ENCODE measurements at regions of chr15 and their contacts with region 1.

Region 1: GRCh38 chr15:38252481-38253412 is at the start of gene SPRED1:
- DNase-seq: no peak
- H3K4me3 ChIP-seq: peak within 1 kb of the TSS; percentile 91 to 99 (median 98)
- H3K27ac ChIP-seq: peak within 1 kb of the TSS; percentile 99 to 100 (median 99)
- H3K4me1 ChIP-seq: peaks cover 13 to 56% (median 39%) of the 10 kb centered on the region in 4 donors
- H3K27me3 ChIP-seq: no peaks in the 10 kb centered on the region
- CTCF ChIP-seq: no peak
- EP300 ChIP-seq: no peak
- POLR2A ChIP-seq: no peak
- total RNA-seq, gene SPRED1: 14.5 to 31.1 (median 19.0) TPM

Region 2: DNA sequence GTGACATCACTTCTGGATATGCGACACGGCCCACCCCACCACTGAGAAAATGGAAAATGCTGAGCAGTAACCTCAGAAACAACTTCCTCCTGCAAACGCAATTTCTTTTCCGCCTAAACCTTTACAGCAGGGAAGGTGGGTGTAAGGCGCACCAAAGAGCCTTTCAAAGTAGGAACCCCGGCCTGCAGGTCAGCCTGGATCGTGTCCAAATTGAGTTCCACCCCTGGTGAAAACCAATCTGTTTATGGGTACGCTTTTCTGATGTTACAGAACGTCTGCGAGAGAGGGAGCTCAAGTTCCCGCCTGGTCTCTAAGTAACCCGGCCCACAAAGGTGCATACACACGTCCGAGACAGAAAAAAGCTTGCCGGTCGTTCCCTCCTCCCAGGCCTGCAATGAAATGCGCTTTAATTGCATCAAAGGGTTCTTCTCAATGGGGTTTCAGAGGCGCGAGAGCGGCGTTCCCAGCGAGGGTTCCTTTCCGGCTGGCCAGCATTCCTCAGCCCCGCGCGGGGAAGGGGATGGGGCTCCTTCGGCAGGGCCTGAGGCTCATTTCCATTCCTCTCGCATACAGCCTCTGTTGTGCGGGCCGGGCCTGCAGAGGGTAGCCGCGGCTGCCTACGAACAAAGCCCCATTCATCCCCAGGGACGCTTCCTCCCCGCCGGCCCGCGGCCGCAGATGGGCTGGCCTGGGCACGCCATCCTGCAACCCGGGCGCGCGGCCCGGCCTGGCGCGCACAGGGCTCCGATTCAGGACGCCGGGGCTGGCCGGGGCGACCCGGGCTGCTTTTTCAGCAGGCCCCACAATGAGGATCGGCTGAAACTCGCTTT is 180.2 kb before region 1 on chr15:
- intact Hi-C with region 1: loop called (anchors 2 kb)
- DNase-seq: no peak
- H3K4me3 ChIP-seq: peak overlapping the region; percentile 58 to 70 (median 64)
- H3K27ac ChIP-seq: peak overlapping the region; percentile 80 to 87 (median 84)
- H3K4me1 ChIP-seq: peaks cover 22 to 42% (median 40%) of the 10 kb centered on the region in 4 donors
- H3K27me3 ChIP-seq: no peaks in the 10 kb centered on the region
- CTCF ChIP-seq: peak in 2 of 3 experiments; percentile 13 to 25
- EP300 ChIP-seq: no peak
- POLR2A ChIP-seq: no peak

Region 3: GRCh38 chr15:38168467-38169070 is 84.2 kb before region 1 on chr15:
- intact Hi-C with region 1: no loop called
- DNase-seq: no peak
- H3K4me3 ChIP-seq: no peak overlapping the region
- H3K27ac ChIP-seq: no peak overlapping the region
- H3K4me1 ChIP-seq: no peaks in the 10 kb centered on the region
- H3K27me3 ChIP-seq: no peaks in the 10 kb centered on the region
- CTCF ChIP-seq: no peak
- EP300 ChIP-seq: no peak
- POLR2A ChIP-seq: no peak

Measured in esophagus muscularis mucosa (tissue), 4 donors.